ENCODE measurements at regions of chr12 and their contacts with region 1.

Region 1: DNA sequence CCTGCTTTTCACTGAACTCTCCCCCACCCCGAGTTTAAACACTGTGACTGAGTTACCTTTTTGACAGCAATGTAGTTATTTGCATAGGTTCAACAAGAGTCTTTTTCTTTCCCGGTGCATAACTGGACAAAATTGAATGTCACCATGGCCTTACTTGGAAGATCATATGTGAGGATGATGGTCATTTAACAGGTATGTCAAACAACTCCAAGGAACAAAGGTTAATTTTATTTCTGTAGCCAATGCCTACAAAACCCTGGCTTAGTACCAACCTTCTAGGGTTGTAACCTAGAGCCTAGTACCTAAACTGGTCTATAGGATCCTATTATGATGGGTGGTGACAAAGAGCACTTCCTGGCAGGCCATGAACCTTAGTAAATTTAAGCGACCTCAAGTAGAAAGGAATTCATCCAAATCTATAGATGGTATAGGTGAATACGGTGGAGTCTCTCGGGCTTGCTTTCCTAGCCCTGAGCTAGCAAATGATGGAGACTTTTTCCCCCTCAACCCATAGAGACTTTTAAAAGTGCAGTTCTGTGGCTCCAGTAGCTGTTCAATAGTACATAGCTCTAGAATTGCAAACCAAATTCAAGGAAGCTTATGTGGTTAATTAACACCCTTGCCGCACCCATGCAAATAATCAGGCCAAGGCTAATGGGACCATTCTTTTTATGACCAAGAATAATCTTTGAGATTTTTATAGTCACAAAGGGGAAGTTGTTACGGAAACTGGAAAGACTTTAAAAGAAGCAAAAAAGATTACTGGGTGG is 89.0 kb downstream of the SLC38A1 start:
- DNase-seq: no peak
- ATAC-seq: no peak

Region 2: GRCh38 chr12:46089407-46090157 is 90.3 kb before region 1 on chr12:
- intact Hi-C with region 1: loop called in 1 of 2 experiments (anchors 5 kb)
- DNase-seq: no peak
- ATAC-seq: no peak

Region 3: DNA sequence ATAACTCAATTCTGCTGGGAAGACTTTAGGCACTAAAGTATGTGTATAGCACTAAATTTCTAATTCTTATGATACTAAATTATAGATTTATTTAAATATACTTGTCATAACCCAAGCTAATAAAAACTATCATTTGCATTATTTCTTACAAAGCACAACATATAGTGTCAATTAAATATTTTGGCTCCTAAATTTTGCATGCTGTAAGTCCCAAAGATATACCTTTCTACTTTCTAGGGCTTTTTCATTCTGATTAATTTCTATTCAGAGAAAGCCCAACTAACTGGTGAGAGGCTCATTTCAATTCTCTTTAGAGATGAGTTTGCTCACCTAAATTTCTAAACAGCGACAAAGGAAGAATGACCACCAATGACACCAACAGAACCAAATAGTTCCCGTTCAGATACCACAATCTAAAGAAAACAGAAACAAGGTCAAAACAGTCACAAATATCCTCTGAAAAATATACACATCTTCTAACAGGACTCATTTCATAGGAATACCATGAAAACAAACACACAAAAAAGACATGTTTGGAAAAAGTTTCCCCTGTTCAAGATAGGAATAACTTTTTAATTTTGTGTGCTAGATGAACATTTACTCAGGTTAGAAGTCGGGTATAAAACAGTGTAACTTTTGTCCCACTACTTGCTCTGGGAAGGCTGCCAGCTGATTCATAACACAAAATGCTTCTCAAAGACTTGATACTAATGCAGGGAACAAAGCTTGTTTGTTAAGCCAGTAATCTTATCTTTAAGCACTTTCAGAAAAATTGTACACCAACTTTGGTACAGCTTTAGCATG is 185.1 kb after region 1 on chr12:
- intact Hi-C with region 1: no loop called
- DNase-seq: peak; percentile 72
- ATAC-seq: peak; percentile 40 to 51